ENCODE measurements at regions of chr10 and their contacts with region 1.

Region 1: GRCh38 chr10:15901889-15902288 is 41.6 kb upstream of the MINDY3 start:
- DNase-seq: no peak
- H3K4me3 Mint-ChIP-seq: no peak overlapping the region
- H3K27ac Mint-ChIP-seq: no peak overlapping the region
- H3K4me1 Mint-ChIP-seq: no peaks in the 10 kb centered on the region
- H3K27me3 Mint-ChIP-seq: peaks cover 16% of the 10 kb centered on the region

Region 2: DNA sequence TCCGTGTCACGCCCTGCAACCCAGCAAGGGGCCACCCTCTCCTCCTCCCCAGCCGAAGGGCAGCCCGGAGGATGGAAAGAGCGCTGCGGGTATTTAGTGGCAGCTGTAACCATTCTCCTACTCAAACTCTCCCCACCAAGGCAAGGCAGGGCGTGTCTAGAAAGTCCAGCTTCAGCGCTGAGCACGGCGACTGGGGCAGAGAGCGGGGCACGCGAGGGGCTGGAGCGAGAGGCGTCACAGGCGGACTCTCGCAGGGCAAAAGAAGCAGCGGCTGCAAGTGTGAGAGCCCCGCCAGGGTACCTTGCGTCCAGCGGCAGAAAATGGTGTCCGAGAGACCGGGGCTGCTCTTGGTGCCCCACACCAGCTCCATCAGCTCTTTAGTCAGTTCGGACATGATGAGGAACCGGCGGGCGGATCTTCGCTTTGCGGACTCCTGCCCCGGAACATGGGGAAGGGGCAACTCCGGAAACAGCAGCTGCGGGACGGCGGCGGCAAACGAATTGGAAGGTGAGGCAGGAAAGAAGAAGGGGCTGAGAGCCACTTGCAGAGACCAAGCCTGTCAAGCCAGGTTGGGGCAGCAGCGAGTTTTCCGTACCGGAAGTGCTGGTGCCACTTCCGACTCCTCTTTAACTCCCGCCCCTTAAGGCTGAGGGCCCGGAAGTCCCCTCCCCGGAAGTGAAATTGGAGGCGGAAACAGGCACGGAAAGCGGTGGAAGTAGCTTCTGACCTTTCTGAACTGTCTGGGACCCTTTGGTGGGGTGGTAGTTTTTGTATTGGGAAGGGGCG is 41.8 kb before region 1 on chr10 and contains the start of gene MINDY3:
- CTCF ChIA-PET with region 1: interaction called, 13 read pairs
- POLR2A ChIA-PET with region 1: no interaction called
- intact Hi-C with region 1: no loop called
- DNase-seq: peak; percentile 88
- H3K4me3 Mint-ChIP-seq: peak within 1 kb of the TSS; percentile 99
- H3K27ac Mint-ChIP-seq: peak within 1 kb of the TSS; percentile 90
- H3K4me1 Mint-ChIP-seq: peaks cover 27% of the 10 kb centered on the region
- H3K27me3 Mint-ChIP-seq: peaks cover 13% of the 10 kb centered on the region
- total RNA-seq, gene MINDY3: 15.3 to 16.7 TPM

Region 3: GRCh38 chr10:15871823-15872222 is 30.1 kb before region 1 on chr10:
- CTCF ChIA-PET with region 1: no interaction called
- POLR2A ChIA-PET with region 1: no interaction called
- intact Hi-C with region 1: no loop called
- DNase-seq: no peak
- H3K4me3 Mint-ChIP-seq: no peak overlapping the region
- H3K27ac Mint-ChIP-seq: no peak overlapping the region
- H3K4me1 Mint-ChIP-seq: no peaks in the 10 kb centered on the region
- H3K27me3 Mint-ChIP-seq: peaks cover 61% of the 10 kb centered on the region

Region 4: DNA sequence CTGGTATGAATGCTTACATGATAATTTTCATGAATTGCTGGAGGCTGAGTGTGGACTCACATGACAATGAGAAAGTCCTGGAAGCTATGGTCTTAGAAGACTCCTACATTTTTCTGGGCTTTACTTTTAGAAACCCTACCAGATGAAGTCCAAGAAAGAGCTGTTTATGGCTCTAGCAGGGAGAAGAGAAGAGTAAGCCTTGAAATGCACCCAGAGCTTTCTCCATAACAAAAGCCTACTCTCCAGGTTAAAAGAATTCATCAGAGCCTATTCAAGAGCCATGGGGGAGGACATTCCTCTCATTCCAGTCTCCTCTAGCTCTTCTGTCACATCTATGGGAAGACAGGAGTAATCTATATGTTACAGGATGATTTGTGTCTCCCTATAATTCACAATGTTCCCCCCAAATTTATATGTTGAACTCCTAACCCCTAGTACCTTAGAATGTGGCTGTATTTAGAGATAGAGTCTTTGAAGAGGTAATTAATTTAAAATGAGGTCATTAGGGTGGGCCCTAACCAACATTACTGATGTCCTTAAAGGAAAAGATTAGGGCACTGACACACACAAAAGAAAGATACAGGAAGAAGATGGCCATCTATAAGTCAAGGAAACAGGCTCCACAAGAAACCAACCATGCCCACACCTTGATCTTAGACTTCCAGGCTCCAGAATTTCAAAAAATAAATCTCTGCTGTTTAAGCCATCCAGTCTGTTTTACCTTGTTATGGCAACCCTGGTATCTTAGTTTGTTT is 341.1 kb after region 1 on chr10:
- CTCF ChIA-PET with region 1: no interaction called
- POLR2A ChIA-PET with region 1: no interaction called
- intact Hi-C with region 1: no loop called
- DNase-seq: no peak
- H3K4me3 Mint-ChIP-seq: no peak overlapping the region
- H3K27ac Mint-ChIP-seq: no peak overlapping the region
- H3K4me1 Mint-ChIP-seq: no peaks in the 10 kb centered on the region
- H3K27me3 Mint-ChIP-seq: peaks cover 4% of the 10 kb centered on the region

Region 5: GRCh38 chr10:16545116-16545736 is 643.3 kb after region 1 on chr10:
- CTCF ChIA-PET with region 1: interaction called, 10 read pairs
- POLR2A ChIA-PET with region 1: no interaction called
- intact Hi-C with region 1: loop called (anchors 10 kb)
- DNase-seq: peak; percentile 10
- H3K4me3 Mint-ChIP-seq: no peak overlapping the region
- H3K27ac Mint-ChIP-seq: no peak overlapping the region
- H3K4me1 Mint-ChIP-seq: no peaks in the 10 kb centered on the region
- H3K27me3 Mint-ChIP-seq: peaks cover 14% of the 10 kb centered on the region

Region 6: DNA sequence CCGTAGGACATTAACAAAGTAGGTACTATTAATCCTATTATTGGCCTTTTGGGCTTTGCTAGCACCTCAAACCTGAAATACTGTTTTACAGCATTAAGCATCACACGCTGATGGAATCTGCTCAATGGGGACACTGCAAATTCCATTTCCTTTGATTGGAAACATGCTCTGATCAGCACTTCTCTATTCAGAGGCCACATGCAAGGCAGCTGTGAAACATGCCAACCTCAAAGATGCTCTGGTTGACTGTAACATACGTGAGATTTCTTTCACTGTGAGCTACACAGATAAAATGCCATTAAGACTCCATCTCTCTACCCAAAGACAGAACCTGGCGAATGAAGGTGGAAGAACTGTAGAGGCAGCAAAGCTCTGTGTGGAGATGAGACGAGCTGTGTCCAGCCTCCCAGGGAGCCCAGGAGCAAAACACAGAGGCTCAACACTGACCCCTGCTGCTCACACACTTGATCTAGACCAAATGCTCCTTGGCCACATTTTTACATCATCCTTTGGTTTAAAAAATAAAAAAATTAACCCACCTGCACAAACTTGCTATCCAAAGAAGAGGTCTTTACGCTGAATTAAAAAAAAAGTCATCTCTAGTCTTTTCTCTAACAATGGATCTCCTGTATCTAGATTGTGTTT is 907.3 kb after region 1 on chr10:
- CTCF ChIA-PET with region 1: interaction called, 19 read pairs
- POLR2A ChIA-PET with region 1: no interaction called
- intact Hi-C with region 1: loop called (anchors 1 kb)
- DNase-seq: peak; percentile 79
- H3K4me3 Mint-ChIP-seq: no peak overlapping the region
- H3K27ac Mint-ChIP-seq: no peak overlapping the region
- H3K4me1 Mint-ChIP-seq: peaks cover 13% of the 10 kb centered on the region
- H3K27me3 Mint-ChIP-seq: no peaks in the 10 kb centered on the region

Measured in activated CD4-positive, alpha-beta memory T cell treated with anti-CD3 and anti-CD28 coated beads for 36 hours (primary cell).